ENCODE measurements at regions of chr7 and their contacts with region 1.

Region 1: GRCh38 chr7:5557920-5558401 is 134.3 kb upstream of the TNRC18 start:
- DNase-seq: peak; percentile 66
- H3K4me3 Mint-ChIP-seq: peak overlapping the region; percentile 74
- H3K27ac Mint-ChIP-seq: no peak overlapping the region
- H3K4me1 Mint-ChIP-seq: peaks cover 40% of the 10 kb centered on the region
- H3K27me3 Mint-ChIP-seq: no peaks in the 10 kb centered on the region
- CTCF ChIP-seq: no peak

Region 2: GRCh38 chr7:4650433-4651047 is 907.4 kb before region 1 on chr7:
- CTCF ChIA-PET with region 1: no interaction called
- intact Hi-C with region 1: no loop called
- DNase-seq: no peak
- H3K4me3 Mint-ChIP-seq: no peak overlapping the region
- H3K27ac Mint-ChIP-seq: no peak overlapping the region
- H3K4me1 Mint-ChIP-seq: peaks cover 10% of the 10 kb centered on the region
- H3K27me3 Mint-ChIP-seq: no peaks in the 10 kb centered on the region
- CTCF ChIP-seq: no peak

Region 3: DNA sequence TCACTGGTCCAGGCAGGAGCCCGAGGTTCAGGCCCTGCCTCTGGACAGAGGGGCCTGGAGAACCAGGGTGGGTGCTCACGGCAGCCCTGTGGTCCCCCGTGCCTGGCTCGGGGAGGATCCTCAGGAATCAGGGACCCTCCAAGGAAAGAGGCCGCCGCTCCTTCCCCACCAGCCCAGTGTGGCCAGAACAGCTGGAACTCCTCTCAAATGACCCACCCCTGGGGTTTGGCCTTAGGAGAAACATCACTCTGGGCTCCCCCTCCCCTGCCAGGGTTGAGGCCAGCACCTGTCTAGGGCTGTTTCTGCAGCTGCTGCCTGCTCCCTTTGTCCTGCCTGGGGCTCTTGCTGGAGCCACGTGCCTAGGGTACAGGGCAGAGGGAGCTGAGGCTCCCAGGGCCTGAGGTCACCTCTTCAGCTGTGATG is 62.5 kb after region 1 on chr7:
- CTCF ChIA-PET with region 1: no interaction called
- intact Hi-C with region 1: no loop called
- DNase-seq: no peak
- H3K4me3 Mint-ChIP-seq: no peak overlapping the region
- H3K27ac Mint-ChIP-seq: no peak overlapping the region
- H3K4me1 Mint-ChIP-seq: no peaks in the 10 kb centered on the region
- H3K27me3 Mint-ChIP-seq: no peaks in the 10 kb centered on the region
- CTCF ChIP-seq: no peak

Region 4: GRCh38 chr7:5665094-5666025 is 107.4 kb after region 1 on chr7:
- CTCF ChIA-PET with region 1: interaction called, 13 read pairs
- intact Hi-C with region 1: no loop called
- DNase-seq: peak; percentile 88
- H3K4me3 Mint-ChIP-seq: no peak overlapping the region
- H3K27ac Mint-ChIP-seq: no peak overlapping the region
- H3K4me1 Mint-ChIP-seq: peaks cover 10% of the 10 kb centered on the region
- H3K27me3 Mint-ChIP-seq: no peaks in the 10 kb centered on the region
- CTCF ChIP-seq: peak; percentile 87